GM10248 (cell line): ENCODE measurements at regions of chr3 and their contacts with region 1.

Region 1: GRCh38 chr3:186540221-186540834 is 3.9 kb downstream of the CRYGS start:
- DNase-seq: peak; percentile 52
- CTCF ChIP-seq: peak; percentile 70

Region 2: GRCh38 chr3:185976977-185977678 is 563.2 kb before region 1 on chr3:
- CTCF ChIA-PET with region 1: interaction called, 103 read pairs
- POLR2A ChIA-PET with region 1: no interaction called
- DNase-seq: peak; percentile 79
- CTCF ChIP-seq: peak; percentile 87

Region 3: GRCh38 chr3:186259612-186260383 is 280.5 kb before region 1 on chr3:
- CTCF ChIA-PET with region 1: interaction called, 356 read pairs
- POLR2A ChIA-PET with region 1: no interaction called
- DNase-seq: peak; percentile 86
- CTCF ChIP-seq: peak; percentile 97

Region 4: GRCh38 chr3:186413615-186414415 is 126.5 kb before region 1 on chr3:
- CTCF ChIA-PET with region 1: interaction called, 11 read pairs
- POLR2A ChIA-PET with region 1: no interaction called
- DNase-seq: peak; percentile 41
- CTCF ChIP-seq: no peak

Region 5: DNA sequence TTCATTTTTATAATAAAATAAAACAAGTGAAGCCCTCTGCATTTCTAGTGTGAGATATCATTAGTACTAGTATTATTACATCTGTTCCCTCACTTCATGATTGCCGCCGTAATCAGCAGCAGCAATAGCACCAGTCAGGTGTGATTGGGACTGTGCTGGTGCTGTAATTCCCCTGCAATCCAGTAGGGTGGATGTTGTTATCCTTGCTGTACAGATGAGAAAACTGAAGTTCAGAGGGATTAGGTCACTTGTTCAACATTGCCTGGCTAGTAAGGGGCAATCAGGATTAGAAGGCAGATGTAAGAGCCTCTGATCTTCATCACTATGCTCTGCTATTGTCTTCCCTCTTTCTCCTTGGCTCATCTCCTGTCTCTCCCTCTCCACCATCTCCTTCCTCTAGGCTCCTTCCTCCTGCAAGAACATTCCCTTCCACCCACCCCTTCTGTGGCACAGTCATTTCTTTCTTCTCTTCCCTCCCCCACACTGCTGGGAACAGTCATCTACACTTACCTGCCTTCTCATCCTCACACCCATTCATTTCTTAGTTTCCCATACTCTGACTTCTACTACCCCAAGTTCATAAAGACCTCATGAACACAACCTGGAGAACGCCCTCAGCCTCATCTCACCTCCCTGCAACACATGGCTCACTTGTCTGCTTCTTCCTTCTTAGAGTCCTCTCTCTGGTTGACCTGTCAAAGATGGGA is 25.9 kb before region 1 on chr3:
- CTCF ChIA-PET with region 1: interaction called, 126 read pairs
- POLR2A ChIA-PET with region 1: interaction called, 10 read pairs
- DNase-seq: no peak
- CTCF ChIP-seq: peak; percentile 24

Region 6: DNA sequence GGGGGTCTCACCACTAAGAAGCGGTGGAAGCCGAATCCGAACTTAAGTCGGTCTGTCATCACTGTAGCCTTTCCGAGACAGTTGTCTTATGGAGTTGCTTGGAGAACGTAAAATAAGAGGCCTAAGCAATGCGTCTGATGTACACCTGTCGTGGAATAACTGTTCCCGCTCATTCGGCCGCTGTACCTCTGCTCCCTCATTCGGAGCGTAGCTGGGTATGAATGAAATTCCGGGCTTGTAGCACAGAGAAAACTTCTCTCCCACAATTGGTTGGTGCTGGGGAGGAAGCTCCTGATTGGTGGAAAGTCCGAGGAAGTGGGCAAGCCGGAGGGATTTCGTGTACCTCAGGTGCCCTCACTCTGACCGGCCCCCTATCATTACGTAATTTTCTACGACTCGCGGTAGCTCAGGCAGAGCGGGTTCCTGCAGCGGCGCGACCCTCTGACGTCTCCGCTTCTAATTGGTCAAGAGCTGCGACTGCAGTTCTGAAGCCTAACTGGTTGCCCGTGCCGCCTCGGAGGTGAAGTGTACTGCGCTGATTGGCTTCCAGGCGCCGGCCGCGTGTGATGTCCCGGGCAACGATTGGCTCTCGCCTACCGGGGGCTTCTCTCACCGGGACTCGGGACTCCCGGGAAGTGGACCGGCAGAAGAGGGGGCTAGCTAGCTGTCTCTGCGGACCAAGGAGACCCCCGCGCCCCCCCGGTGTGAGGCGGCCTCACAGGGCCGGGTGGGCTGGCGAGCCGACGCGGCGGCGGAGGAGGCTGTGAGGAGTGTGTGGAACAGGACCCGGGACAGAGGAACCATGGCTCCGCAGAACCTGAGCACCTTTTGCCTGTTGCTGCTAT is 30.0 kb after region 1 on chr3 and contains the start of gene DNAJB11:
- CTCF ChIA-PET with region 1: interaction called, 22 read pairs
- POLR2A ChIA-PET with region 1: interaction called, 5 read pairs
- DNase-seq: peak; percentile 98
- CTCF ChIP-seq: no peak

Region 7: DNA sequence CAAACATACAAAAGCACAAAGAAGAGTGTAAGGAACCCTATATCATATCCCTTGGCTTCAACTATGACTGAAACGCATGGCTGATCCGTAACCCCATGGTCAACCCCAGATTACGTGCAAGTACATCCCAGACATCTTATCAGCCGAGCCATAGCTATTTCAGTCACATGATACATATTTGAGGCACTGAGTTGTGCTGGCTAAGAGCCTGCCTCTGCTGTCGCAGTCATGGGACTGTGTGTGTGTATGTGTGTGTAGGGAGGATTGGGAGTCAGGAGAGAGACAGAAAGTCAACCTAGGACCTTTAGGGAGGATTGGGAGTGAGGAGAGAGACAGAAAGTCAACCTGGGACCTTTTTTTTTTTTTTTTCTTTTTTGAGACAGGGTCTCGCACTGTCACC is 398.4 kb after region 1 on chr3:
- CTCF ChIA-PET with region 1: no interaction called
- POLR2A ChIA-PET with region 1: no interaction called
- DNase-seq: no peak
- CTCF ChIP-seq: no peak